Right ventricle myocardium inferior (tissue), 1 donor: ENCODE measurements at regions of chr4 and their contacts with region 1.

Region 1: DNA sequence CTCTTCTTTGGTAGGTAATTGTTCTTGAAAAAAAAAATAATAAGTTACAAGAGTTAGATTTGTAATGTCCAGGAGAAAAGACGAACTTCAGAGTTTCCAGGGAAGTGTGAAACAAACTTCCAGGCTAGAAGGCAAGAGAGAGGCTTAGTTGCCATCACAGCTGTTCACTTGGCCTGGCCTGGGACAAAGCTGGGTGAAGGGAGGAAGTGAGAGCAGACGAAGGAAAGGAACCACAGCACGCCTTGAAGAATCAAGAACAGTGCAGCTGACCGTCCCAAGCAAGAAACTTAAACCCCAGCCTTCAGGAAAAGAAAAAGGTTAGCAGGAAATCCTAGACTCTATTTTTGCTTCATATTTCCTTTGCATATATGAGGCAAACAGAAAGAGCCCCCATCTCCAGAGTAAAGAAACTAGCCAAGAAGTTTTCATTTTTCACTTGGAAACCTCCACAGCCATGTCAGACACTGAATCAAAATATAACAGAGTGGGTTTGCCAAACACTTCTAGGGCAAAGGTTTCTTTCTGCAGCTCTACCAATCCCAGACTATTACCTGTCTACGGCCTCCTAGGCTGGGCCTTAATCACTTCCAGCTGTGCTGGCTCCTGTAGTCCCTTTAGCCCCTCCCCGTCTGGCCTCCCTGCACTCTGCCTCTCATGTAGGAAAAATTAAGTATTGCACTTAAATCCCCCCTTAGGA is 209.6 kb downstream of the SPATA18 start:
- DNase-seq: no peak
- ATAC-seq: peak; percentile 81

Region 2: GRCh38 chr4:52358883-52359321 is 98.2 kb after region 1 on chr4:
- intact Hi-C with region 1: loop called (anchors 10 kb)
- DNase-seq: no peak
- ATAC-seq: peak; percentile 91